ENCODE measurements at regions of chr3 and their contacts with region 1.

Region 1: GRCh38 chr3:73056014-73056844 is 5.2 kb upstream of the EBLN2 start:
- DNase-seq: no peak
- ATAC-seq: no peak
- H3K4me3 Mint-ChIP-seq: no peak overlapping the region
- H3K27ac Mint-ChIP-seq: no peak overlapping the region
- H3K4me1 Mint-ChIP-seq: peaks cover 26% of the 10 kb centered on the region
- H3K27me3 Mint-ChIP-seq: no peaks in the 10 kb centered on the region
- CTCF ChIP-seq: peak; percentile 65

Region 2: DNA sequence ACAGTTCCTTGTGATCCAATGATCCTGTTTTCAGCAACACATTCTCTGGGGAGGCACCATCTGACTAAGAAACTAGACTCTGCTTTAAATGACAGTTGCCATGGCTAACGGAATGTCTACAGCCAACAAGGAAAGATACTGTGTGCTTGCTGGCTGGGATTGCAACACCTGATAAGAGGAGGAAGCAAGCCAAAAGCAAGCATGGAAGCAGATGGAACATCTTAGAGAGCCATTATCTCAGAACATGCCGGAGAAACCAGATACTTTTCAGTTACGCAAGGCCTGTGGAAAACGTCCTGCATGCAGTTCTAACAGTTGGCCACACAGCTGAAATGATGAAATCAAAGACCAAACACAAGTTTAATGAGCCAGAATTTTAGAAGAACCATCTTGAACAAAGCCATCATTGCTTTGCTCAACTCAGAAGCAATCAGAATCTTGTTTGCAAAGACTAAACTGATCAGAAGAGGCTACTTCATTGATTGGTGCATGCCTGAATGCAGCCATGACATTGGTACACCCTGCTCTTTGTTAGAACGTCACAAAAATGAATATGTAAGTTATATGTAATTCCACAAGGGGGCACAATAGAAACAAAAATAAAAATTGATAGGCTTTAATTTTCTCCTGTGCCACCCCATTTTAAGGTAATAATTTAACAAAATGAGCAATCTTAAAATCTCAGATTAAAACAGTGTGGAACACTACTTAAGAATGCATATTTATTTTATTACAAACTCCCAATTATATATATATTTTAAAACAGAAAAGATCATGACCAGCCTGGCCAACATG is 117.6 kb before region 1 on chr3:
- CTCF ChIA-PET with region 1: interaction called, 60 read pairs
- POLR2A ChIA-PET with region 1: interaction called, 3 read pairs
- intact Hi-C with region 1: loop called (anchors 1 kb)
- DNase-seq: peak; percentile 38
- ATAC-seq: peak; percentile 97
- H3K4me3 Mint-ChIP-seq: no peak overlapping the region
- H3K27ac Mint-ChIP-seq: no peak overlapping the region
- H3K4me1 Mint-ChIP-seq: no peaks in the 10 kb centered on the region
- H3K27me3 Mint-ChIP-seq: no peaks in the 10 kb centered on the region
- CTCF ChIP-seq: peak; percentile 67

Region 3: GRCh38 chr3:72964633-72965032 is 91.6 kb before region 1 on chr3:
- CTCF ChIA-PET with region 1: interaction called, 10 read pairs
- POLR2A ChIA-PET with region 1: no interaction called
- intact Hi-C with region 1: no loop called
- DNase-seq: no peak
- ATAC-seq: no peak
- H3K4me3 Mint-ChIP-seq: no peak overlapping the region
- H3K27ac Mint-ChIP-seq: no peak overlapping the region
- H3K4me1 Mint-ChIP-seq: peaks cover 32% of the 10 kb centered on the region
- H3K27me3 Mint-ChIP-seq: no peaks in the 10 kb centered on the region
- CTCF ChIP-seq: no peak

Region 4: GRCh38 chr3:73007992-73008712 is 48.1 kb before region 1 on chr3:
- CTCF ChIA-PET with region 1: interaction called, 13 read pairs
- POLR2A ChIA-PET with region 1: no interaction called
- intact Hi-C with region 1: no loop called
- DNase-seq: no peak
- ATAC-seq: peak; percentile 56
- H3K4me3 Mint-ChIP-seq: no peak overlapping the region
- H3K27ac Mint-ChIP-seq: peak overlapping the region; percentile 6
- H3K4me1 Mint-ChIP-seq: peaks cover 89% of the 10 kb centered on the region
- H3K27me3 Mint-ChIP-seq: no peaks in the 10 kb centered on the region
- CTCF ChIP-seq: no peak

Region 5: DNA sequence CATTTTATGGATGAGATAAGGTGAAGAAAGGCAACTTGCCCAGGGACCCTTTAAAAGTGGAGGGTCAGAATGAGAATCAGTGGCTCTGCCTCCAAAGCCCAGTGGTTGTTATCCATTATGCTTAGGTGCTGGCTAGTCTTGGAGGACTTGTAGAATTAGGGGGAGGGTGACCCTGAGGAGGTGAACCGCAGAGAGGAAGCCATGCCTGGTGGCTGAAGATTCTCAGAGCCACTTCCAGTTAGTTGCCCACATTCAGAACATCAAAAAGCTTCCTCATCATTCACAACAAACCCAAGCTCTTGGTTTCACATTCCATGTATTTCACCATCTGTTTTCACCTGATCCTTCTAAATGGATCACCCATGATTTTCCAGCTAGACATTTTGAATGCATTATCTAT is 16.4 kb after region 1 on chr3:
- CTCF ChIA-PET with region 1: interaction called, 11 read pairs
- POLR2A ChIA-PET with region 1: no interaction called
- intact Hi-C with region 1: no loop called
- DNase-seq: peak; percentile 14
- ATAC-seq: no peak
- H3K4me3 Mint-ChIP-seq: no peak overlapping the region
- H3K27ac Mint-ChIP-seq: no peak overlapping the region
- H3K4me1 Mint-ChIP-seq: peaks cover 32% of the 10 kb centered on the region
- H3K27me3 Mint-ChIP-seq: no peaks in the 10 kb centered on the region
- CTCF ChIP-seq: no peak

Region 6: DNA sequence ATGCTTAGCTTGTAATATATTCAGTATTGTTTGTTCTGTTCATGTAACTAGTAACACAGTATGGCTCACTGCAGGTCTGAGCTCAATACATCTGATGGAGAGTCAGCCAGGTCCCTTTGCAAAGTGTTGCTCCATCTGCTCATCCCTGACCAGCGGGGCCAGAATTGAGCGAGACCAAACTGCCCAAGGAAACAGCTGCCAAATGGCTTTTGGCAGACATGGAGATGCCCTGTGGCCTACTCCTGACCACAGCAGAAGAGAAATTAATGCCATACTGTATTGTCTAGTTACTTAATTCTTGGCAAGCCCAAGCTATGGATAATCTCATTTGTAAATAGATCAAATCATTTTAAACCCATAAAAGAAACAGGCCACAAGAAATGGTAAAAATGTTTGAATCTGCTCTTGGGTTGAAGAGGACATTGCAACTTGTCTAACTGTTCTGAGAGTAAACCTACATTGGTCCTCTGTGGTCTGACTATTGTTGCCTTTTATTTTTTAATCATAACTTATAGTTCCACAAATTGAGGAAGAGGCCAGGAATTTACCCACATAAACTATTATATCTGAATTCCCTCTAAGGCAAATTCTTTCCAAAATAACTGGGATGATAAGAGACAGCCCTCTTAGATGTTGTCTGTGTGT is 214.7 kb after region 1 on chr3:
- CTCF ChIA-PET with region 1: no interaction called
- POLR2A ChIA-PET with region 1: no interaction called
- intact Hi-C with region 1: no loop called
- DNase-seq: no peak
- ATAC-seq: no peak
- H3K4me3 Mint-ChIP-seq: no peak overlapping the region
- H3K27ac Mint-ChIP-seq: no peak overlapping the region
- H3K4me1 Mint-ChIP-seq: no peaks in the 10 kb centered on the region
- H3K27me3 Mint-ChIP-seq: no peaks in the 10 kb centered on the region
- CTCF ChIP-seq: no peak

Measured in activated CD8-positive, alpha-beta T cell treated with anti-CD3 and anti-CD28 coated beads for 36 hours (primary cell).